ENCODE measurements at regions of chr4 and their contacts with region 1.

Region 1: GRCh38 chr4:40749717-40750460 is at the start of gene NSUN7:
- DNase-seq: peak; percentile 49
- ATAC-seq: peak; percentile 77
- H3K4me3 Mint-ChIP-seq: peak within 1 kb of the TSS; percentile 77
- H3K27ac Mint-ChIP-seq: no peak within 1 kb of the TSS
- H3K4me1 Mint-ChIP-seq: peaks cover 9% of the 10 kb centered on the region
- H3K27me3 Mint-ChIP-seq: peaks cover 21% of the 10 kb centered on the region
- CTCF ChIP-seq: no peak
- total RNA-seq, gene NSUN7: 1.4 and 1.6 TPM in 2 replicates

Region 2: DNA sequence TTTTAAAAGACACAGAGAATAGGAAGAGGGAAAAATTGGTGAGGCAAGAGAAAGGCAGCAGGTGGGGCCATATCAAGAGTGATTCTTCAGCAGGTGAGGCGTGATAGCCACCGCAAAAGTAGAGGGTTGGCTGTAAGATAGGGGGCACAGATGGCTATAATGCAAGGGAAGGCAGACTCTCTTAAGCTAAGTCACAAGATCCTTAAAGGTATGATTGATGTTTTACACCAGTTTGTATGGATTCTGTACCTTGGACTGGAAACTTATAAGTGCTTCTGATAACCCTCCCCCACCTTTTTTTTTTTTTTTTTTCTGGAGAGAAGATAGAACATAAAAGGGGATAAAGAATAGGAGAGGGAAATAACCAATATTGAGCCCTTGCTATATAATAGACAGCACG is 39.9 kb after region 1 on chr4:
- CTCF ChIA-PET with region 1: no interaction called
- POLR2A ChIA-PET with region 1: no interaction called
- intact Hi-C with region 1: loop called (anchors 5 kb)
- DNase-seq: no peak
- ATAC-seq: no peak
- H3K4me3 Mint-ChIP-seq: no peak overlapping the region
- H3K27ac Mint-ChIP-seq: no peak overlapping the region
- H3K4me1 Mint-ChIP-seq: peaks cover 2% of the 10 kb centered on the region
- H3K27me3 Mint-ChIP-seq: peaks cover 4% of the 10 kb centered on the region
- CTCF ChIP-seq: no peak

Measured in activated B cell treated with CpG ODN at 0.5 μM for 24 hours (primary cell).